HEK293T (cell line): ENCODE measurements at regions of chr20 and their contacts with region 1.

Region 1: DNA sequence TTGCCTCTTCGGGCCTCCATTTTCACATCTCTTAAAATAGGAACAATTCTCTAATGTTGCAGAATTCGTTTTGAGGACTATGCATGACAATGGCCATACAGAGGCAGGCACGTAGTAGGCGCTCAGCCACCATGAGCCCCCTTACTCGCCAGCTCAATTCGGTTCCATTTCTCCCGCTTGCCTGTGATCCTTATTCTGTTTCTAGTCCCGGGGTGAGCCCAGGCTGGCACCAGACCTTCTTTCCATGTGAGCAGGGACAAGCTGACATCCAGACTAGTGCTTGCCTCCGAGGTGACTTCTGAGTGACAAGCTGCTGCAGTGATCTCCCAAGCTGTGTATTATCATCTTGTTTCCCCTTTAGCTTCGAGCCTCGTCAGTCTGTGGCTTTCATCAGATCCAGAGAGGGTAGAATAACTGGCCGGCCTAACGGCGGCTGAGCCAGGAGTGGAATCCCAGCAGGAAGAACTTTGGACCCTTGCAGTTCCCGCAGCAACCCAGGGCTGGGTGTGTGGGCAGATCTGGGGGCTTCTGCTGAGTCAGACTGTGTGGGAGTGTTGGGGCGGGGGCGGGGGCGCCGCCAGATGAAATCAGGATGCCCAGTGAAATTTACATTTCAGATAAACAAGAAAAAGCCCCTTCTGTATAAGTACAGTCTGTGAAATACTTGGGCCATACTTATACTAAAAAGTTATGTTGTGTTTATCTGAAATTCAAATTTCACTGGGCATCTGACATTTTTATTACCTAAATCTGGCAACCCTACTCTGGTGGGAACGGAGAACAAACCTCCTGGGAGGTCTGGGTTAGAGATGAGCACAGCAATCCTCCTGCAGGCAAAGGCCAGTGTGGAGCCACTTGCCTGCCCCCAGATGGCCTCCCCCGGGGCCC is 10.9 kb downstream of the BANF2 start:
- DNase-seq: no peak

Region 2: GRCh38 chr20:17682103-17682888 is 28.3 kb before region 1 on chr20 and contains the start of gene RRBP1:
- CTCF ChIA-PET with region 1: interaction called, 14 read pairs
- POLR2A ChIA-PET with region 1: interaction called, 4 read pairs
- DNase-seq: peak; percentile 96